ENCODE measurements at regions of chr13 and their contacts with region 1.

Region 1: GRCh38 chr13:31105020-31105795 is 56.5 kb downstream of the HSPH1 start:
- DNase-seq: no peak
- H3K4me3 ChIP-seq: no peak overlapping the region
- H3K27ac ChIP-seq: no peak overlapping the region
- H3K4me1 ChIP-seq: no peaks in the 10 kb centered on the region
- H3K27me3 ChIP-seq: no peaks in the 10 kb centered on the region
- CTCF ChIP-seq: peak in 1 of 3 experiments; percentile 13; a peak in 1 of 4 replicates
- EP300 ChIP-seq: no peak
- POLR2A ChIP-seq: no peak
- RAD21 ChIP-seq: 0 out of 4 replicates have a peak, but pooled peaks of 1 of the 2 experiments have one; percentile 16

Region 2: GRCh38 chr13:31115616-31116015 is 10.4 kb after region 1 on chr13:
- CTCF ChIA-PET with region 1: interaction called, 13 read pairs
- POLR2A ChIA-PET with region 1: no interaction called
- DNase-seq: no peak
- H3K4me3 ChIP-seq: no peak overlapping the region
- H3K27ac ChIP-seq: no peak overlapping the region
- H3K4me1 ChIP-seq: 0 out of 7 replicates have a peak, but pooled peaks cover 0 to 4% (median under 1%) of the 10 kb centered on the region in 4 experiments
- H3K27me3 ChIP-seq: no peaks in the 10 kb centered on the region; a peak in 1 of 7 replicates
- CTCF ChIP-seq: no peak
- EP300 ChIP-seq: no peak
- POLR2A ChIP-seq: no peak
- RAD21 ChIP-seq: no peak

Region 3: DNA sequence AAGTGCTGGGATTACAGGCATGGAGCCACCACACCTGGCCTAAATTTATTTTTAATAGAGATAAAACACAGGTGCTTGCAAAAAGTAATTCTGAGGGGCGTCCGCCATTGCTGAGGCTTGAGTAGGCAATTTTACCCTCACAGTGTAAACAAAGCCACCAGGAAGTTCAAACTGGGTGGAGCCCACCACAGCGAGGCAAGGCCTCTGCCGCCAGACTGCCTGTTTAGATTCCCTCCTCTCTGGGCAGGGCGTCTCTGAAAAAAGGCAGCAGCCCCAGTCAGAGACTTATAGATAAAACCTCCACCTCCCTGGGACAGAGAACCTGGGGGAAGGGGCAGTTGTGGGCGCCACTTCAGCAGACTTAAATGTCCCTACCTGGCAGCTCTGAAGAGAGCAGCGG is 145.2 kb after region 1 on chr13:
- CTCF ChIA-PET with region 1: no interaction called
- POLR2A ChIA-PET with region 1: no interaction called
- DNase-seq: no peak
- H3K4me3 ChIP-seq: no peak overlapping the region
- H3K27ac ChIP-seq: no peak overlapping the region
- H3K4me1 ChIP-seq: no peaks in the 10 kb centered on the region
- H3K27me3 ChIP-seq: no peaks in the 10 kb centered on the region
- CTCF ChIP-seq: no peak
- EP300 ChIP-seq: no peak
- POLR2A ChIP-seq: no peak
- RAD21 ChIP-seq: no peak

Measured in H1 (cell line).